ENCODE measurements at regions of chr4 and their contacts with region 1.

Region 1: DNA sequence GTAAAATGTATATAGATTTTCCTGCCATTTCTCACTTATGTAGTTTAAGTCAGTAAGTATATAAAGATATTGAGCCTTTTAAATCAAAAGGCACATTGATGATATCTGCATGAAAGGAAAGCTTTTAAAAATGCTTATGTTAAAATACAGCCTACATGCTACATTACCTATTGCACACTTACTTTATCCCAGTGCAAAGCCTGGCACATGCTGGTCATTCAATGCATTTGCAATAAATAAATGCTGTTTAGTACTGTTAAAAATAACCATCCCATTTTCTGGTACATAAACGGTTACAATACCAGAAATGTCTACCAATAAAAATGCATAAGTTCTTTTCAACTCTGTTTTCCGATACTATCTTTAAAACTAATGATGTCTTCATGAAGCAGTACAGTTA is 22.1 kb upstream of the SPATA4 start:
- DNase-seq: no peak
- H3K4me3 Mint-ChIP-seq: no peak overlapping the region
- H3K27ac Mint-ChIP-seq: no peak overlapping the region
- H3K4me1 Mint-ChIP-seq: no peaks in the 10 kb centered on the region
- H3K27me3 Mint-ChIP-seq: peaks cover 3% of the 10 kb centered on the region

Region 2: GRCh38 chr4:175671491-175671934 is 546.0 kb before region 1 on chr4:
- intact Hi-C with region 1: no loop called
- DNase-seq: no peak
- H3K4me3 Mint-ChIP-seq: no peak overlapping the region
- H3K27ac Mint-ChIP-seq: no peak overlapping the region
- H3K4me1 Mint-ChIP-seq: no peaks in the 10 kb centered on the region
- H3K27me3 Mint-ChIP-seq: no peaks in the 10 kb centered on the region

Region 3: DNA sequence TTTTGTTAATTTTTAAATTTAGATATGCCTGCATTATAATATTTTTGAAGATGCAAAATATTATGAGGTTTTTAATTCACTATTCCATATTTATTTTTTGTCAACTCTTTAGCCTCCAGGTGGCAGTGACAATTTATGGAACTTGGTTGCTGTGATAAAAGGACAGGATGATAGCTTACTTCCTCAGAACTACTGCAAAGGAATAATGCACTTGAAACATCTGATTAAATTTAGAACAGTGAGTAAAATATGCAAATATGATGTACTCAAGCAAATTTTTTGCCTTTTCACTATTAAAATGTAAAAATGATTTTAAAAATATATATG is 67.2 kb before region 1 on chr4:
- intact Hi-C with region 1: loop called (anchors 2 kb)
- DNase-seq: no peak
- H3K4me3 Mint-ChIP-seq: no peak overlapping the region
- H3K27ac Mint-ChIP-seq: no peak overlapping the region
- H3K4me1 Mint-ChIP-seq: no peaks in the 10 kb centered on the region
- H3K27me3 Mint-ChIP-seq: no peaks in the 10 kb centered on the region

Measured in activated T-helper 1 cell treated with anti-CD3 and anti-CD28 coated beads, Interleukin-12 subunit alpha, Interleukin-12 subunit beta, Interleukin-2, Interleukin-4 antibody, amounts not matched to agents 30 ng/mL and 10 ng/mL and 1 ng/mL, durations not matched to agents 14 hours and 24 hours and 36 hours (primary cell).